Heart left ventricle (tissue), 16 donors: ENCODE measurements at regions of chrX and their contacts with region 1.

Region 1: DNA sequence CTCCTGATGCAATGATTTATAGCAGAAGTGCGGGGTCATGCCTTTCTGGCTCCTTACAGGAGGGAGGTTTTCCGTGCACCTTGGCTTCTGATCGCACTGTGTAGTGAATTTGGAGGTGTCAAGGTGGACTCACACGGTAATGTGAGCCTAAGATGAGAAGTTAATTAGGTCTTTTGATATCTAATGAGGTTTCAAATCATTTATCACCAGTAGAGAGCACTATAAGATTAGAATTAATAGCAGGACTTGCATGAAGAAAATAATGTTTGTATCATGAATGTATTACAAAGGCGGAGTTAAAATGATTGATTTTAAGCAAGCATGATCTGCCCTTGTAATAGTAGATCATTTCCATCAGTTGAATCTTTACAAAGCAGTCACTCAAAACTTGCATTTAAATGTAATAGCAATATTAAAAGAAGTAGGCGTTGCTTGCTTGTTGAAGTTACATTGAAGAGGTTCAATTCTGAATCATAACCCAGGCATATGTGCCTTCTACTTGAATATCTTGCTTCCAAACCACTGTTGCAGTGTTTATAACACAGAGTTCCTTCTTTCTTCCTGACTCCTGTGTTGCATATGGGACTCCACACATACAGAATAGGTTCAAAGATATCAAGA is 152.1 kb downstream of the FMR1NB start:
- DNase-seq: no peak
- ATAC-seq: no peak
- H3K4me3 ChIP-seq: no peak overlapping the region
- H3K27ac ChIP-seq: no peak overlapping the region
- H3K4me1 ChIP-seq: no peaks in the 10 kb centered on the region
- H3K27me3 ChIP-seq: no peaks in the 10 kb centered on the region
- CTCF ChIP-seq: peak in 2 of 12 donors; percentile 18 to 36
- POLR2A ChIP-seq: no peak

Region 2: GRCh38 chrX:148466292-148466691 is 333.1 kb after region 1 on chrX:
- intact Hi-C with region 1: no loop called
- DNase-seq: no peak
- ATAC-seq: no peak
- H3K4me3 ChIP-seq: no peak overlapping the region
- H3K27ac ChIP-seq: no peak overlapping the region
- H3K4me1 ChIP-seq: no peaks in the 10 kb centered on the region
- H3K27me3 ChIP-seq: peaks cover 0 to 4% (median 0%) of the 10 kb centered on the region in 9 donors
- CTCF ChIP-seq: no peak
- POLR2A ChIP-seq: no peak

Region 3: DNA sequence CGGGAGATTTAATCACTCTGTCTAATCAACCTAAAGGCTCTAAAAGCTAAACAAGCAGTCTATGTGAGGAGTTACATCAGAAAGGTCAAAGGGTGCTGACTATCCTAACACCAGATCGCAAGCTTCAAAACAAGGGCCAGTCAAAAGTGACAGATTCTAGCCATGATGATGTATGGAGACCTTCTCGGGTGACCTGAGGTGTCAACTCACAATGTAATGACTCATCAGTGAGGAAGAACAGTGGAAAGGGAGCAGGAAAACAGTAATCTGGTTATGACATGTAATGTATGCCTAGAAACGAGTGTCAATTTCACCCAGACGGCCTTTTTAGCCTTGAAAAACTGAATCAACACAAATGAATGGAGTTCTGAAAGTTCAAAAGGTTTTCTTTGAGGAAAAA is 996.6 kb after region 1 on chrX:
- intact Hi-C with region 1: no loop called
- DNase-seq: no peak
- ATAC-seq: no peak
- H3K4me3 ChIP-seq: no peak overlapping the region
- H3K27ac ChIP-seq: no peak overlapping the region
- H3K4me1 ChIP-seq: no peaks in the 10 kb centered on the region
- H3K27me3 ChIP-seq: no peaks in the 10 kb centered on the region
- CTCF ChIP-seq: no peak
- POLR2A ChIP-seq: no peak

Region 4: GRCh38 chrX:149286940-149287349 is 1153.7 kb after region 1 on chrX:
- intact Hi-C with region 1: loop called in 4 of 10 experiments (anchors 5 to 10 kb)
- DNase-seq: peak in 2 of 5 donors; percentile 18 to 27
- ATAC-seq: no peak
- H3K4me3 ChIP-seq: no peak overlapping the region
- H3K27ac ChIP-seq: no peak overlapping the region
- H3K4me1 ChIP-seq: no peaks in the 10 kb centered on the region
- H3K27me3 ChIP-seq: peaks cover 0 to 4% (median 0%) of the 10 kb centered on the region in 9 donors
- CTCF ChIP-seq: peak; percentile 40 to 73 (median 54)
- POLR2A ChIP-seq: no peak

Region 5: GRCh38 chrX:149296092-149296491 is 1162.9 kb after region 1 on chrX:
- intact Hi-C with region 1: loop called in 1 of 10 experiments (anchors 10 kb)
- DNase-seq: no peak
- ATAC-seq: no peak
- H3K4me3 ChIP-seq: no peak overlapping the region
- H3K27ac ChIP-seq: no peak overlapping the region
- H3K4me1 ChIP-seq: no peaks in the 10 kb centered on the region
- H3K27me3 ChIP-seq: peaks cover 0 to 5% (median 0%) of the 10 kb centered on the region in 9 donors
- CTCF ChIP-seq: no peak
- POLR2A ChIP-seq: no peak